Mucosa of descending colon (tissue), 3 donors: ENCODE measurements at regions of chr14 and their contacts with region 1.

Region 1: DNA sequence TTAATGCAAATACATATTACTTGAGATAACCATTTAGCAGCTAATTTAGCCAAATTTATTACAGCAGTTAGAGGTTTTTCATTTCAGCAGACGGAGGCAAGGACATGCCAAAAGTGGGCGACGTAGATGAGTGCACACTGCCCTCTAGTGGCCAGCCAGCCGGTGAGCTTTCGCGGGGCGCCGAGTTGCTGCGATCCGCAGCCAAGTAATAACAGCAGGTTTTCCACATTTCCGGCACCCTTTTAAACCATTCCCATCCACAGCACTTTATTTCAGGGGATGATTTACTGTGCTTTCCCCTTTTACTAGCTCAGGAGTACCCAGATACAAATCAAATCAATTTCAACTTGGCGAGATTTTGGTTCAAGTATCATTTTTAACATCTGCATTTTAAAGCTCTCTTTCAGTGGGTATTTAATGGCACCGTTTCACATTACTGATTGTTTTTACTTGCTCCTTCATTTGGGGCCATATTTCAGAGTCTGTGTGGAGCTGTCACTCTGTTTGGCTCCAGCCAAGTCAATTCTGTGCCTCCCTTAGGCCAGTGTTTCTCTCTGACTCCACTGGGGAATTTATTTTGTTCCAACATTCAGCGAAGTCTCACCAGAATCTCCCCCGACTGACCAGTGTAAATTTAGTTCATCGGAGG is 158.0 kb downstream of the EGLN3 start:
- DNase-seq: peak; percentile 69 to 88 (median 87)
- ATAC-seq: peak; percentile 91
- H3K4me3 ChIP-seq: no peak overlapping the region
- H3K4me1 ChIP-seq: peaks cover 3% of the 10 kb centered on the region
- CTCF ChIP-seq: peak; percentile 75

Region 2: DNA sequence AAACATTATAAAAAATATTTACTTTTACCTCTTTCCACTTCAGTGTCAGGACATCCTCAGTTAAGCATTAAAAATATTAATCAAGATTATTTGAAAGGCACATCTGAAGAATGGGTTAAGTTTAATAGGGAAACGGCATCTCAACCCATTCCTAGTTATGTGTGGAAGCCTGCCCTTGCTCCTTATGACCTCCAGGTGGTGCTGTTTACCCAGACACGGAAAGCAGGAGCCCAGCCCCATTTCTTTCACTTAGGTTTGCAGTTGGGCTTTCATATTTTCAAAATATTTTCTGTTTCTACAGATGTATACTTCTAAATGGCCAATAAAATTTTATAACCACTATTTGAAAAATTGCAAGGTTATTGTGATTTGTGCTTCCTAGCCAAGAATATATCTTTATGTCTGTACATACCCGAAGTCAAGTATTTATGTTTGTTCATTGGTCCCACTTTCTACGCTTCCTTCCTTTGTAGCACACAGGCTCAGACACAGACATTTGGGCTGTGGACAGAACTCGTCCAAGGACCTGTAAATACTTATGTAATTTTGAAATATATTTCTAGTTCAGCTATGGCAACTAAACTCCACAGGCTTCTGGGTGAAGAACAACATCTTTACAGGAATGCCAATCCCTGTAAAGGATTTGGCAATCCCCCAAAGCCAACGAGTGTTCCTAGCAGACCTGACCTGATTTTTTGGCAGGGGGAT is 1216.6 kb before region 1 on chr14:
- intact Hi-C with region 1: loop called (anchors 10 kb)
- DNase-seq: peak in 1 of 3 donors; percentile 70
- ATAC-seq: peak; percentile 84
- H3K4me3 ChIP-seq: no peak overlapping the region
- H3K4me1 ChIP-seq: no peaks in the 10 kb centered on the region
- CTCF ChIP-seq: peak; percentile 94

Region 3: GRCh38 chr14:33475623-33476022 is 317.2 kb before region 1 on chr14:
- intact Hi-C with region 1: loop called in 1 of 2 experiments (anchors 10 kb)
- DNase-seq: peak in 2 of 3 donors; percentile 69 to 88
- ATAC-seq: peak; percentile 95
- H3K4me3 ChIP-seq: no peak overlapping the region
- H3K4me1 ChIP-seq: peaks cover 4% of the 10 kb centered on the region
- CTCF ChIP-seq: no peak